Left cardiac atrium (tissue), 4 donors: ENCODE measurements at regions of chr17 and their contacts with region 1.

Region 1: DNA sequence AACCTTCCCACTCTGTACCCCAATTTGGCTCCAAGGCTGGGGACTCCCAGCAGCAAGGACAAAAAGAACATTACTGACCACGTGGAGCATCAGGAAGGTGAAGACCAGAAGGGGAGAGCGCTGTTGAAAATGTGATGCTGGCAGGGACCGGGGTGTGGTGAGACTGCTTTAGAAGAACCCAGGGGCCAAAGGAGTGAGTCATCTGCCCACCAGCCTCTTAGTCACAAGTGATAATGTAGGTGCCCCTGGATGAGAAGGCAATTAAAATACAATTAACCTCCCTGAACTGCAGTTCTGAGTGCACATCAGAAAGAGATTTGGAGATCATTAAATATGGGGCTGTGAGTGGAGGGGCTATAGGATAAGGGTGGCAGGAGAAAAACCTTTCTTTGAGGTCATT is 366.6 kb upstream of the CCL2 start:
- DNase-seq: no peak
- ATAC-seq: no peak

Region 2: DNA sequence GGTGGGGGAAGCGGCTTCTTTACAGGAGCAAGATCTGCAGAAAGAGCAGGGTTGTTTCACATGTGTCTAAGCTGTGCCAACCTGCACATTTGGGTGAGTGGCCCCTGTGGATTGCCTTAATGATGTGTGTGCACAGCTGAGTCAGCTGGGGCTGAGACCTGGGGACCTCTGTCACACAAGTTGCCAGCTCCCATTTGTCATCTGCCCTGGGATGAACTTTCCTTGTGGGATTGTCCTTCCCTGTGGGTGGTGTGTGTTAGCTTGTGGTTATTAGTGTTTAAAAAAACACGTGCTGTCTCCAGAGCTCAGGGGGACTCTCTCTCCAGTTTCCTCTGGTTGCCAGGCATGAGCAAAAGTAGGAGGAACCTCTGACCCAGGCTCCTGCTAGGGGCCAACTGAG is 33.9 kb before region 1 on chr17:
- intact Hi-C with region 1: loop called in 1 of 2 experiments (anchors 5 kb)
- DNase-seq: no peak
- ATAC-seq: no peak

Region 3: DNA sequence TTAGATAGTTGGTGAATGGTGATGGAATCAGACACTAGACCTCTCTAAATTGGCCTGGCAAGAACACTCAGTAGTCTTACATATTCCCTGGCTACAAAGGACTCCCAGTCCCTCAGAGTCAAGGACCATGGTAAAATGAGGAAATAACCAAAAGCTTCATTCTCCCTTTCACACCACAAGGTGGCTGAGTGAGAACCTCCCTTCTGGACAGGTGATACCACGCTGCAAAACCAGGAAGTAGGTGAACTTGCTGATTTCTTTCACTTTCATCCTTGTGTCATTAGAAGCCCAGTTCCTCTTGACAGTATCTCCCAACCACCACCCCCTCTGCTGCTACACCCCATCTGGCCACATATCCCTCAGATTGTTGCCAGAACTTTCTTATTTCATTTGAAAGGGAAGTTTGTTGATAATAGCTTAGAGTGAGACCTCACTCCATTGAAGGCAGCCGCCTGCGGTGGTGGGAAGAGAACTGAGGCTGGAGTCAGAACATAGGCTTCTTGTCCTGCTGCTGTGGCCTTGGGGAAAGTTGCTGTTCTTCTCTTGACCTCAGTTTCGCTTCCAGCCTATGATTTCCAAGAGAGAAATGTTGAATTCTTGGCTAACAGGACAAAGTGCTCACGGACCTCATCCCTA is 76.0 kb after region 1 on chr17:
- intact Hi-C with region 1: no loop called
- DNase-seq: no peak
- ATAC-seq: no peak